Esophagus muscularis mucosa (tissue), 4 donors: ENCODE measurements at regions of chr10 and their contacts with region 1.

Region 1: DNA sequence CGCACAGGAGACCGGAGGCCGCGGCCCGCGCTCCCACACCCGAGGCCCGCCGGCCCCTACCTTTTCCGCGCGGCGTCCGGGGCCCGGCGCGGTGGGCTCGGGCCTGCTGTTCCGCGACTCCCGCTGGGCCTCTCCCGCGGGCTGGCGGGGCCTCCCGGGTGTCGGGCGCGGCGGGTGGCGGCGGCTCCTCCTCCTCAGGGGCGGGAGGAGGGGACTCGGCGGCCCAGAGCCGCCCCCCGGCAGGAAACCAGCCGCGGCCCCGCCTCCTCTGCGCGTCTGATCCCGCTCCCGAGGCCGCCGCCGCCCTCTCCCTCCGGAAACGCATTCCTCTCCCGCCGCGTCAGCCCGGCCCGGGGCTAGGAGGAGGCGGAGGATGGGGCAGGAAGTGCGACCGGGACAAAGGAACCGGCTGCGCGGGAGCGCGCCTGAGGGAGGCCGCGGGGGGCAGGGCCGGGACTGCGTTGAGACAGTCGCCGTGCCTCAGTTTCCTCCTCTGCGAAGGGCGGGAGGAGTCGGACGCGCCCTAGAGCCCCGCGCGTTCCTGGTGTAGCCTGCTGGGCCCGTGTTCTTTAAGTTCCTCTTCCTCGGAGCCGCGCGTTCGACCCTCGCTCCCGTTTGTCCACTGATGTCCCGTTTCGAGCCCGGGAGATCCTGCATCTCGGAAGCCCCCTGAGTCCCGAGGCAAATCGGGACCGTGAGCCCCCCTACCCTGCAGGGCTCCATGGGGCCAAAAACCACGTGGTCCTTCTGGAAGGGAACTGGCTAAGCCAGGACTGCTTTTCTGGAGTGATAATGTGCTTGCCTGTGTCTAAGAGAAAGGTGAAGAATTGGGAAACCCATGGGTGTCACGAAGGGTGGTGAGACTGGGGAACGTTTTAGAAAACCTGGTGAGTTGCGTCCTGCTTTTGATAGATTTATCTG is at the start of gene ITGB1:
- DNase-seq: peak; percentile 98
- H3K4me3 ChIP-seq: peak within 1 kb of the TSS; percentile 96 to 100 (median 99)
- H3K27ac ChIP-seq: peak within 1 kb of the TSS; percentile 96 to 100 (median 98)
- H3K4me1 ChIP-seq: peaks cover 46 to 71% (median 61%) of the 10 kb centered on the region in 4 donors
- H3K27me3 ChIP-seq: no peaks in the 10 kb centered on the region
- CTCF ChIP-seq: no peak
- EP300 ChIP-seq: peak; percentile 28
- POLR2A ChIP-seq: peak; percentile 92
- total RNA-seq, gene ITGB1: 1,385 to 1,873 (median 1,661) TPM

Region 2: DNA sequence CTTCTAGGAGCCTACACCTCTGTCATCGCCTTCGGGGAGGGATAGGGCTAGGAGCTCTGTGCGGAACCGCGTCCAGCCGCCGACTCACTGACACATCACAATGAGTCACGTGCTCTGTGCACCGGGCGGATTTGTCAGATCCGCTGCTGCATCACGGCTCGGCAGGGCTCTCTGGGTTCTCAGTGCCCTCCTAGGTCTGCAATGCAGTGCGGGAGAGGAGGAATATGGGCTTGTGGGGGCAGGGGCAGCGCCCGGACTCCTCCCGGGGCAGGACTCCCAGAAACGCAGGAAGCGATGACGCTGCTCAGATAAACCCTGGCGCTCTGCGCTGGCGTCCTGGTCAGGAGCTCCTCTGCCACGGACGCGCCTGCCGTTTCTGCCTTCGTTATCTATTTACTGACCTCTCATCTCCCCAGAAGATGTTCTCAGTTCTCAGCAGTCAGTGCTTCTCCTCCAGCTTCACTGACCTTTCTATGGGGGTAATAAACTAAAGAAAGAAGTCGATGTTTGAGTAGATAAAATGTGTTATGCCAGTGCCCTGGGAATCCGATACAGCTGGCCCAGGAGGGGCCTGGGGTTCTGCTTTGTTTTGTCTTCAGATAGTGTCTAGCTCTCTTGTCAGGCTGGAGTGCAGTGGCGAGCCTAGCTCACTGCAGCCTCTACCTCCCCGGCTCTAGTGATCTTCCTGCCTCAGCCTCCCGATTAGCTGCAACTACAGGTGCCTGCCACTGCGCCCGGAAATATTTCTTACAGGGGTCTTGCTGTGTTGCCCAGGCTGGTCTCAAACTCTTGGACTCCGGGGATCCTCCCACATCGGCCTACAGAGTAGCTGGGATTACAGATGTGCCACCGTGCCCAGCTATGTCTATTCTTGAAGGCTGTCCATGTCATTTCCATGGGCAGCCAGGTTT is 22.5 kb after region 1 on chr10:
- intact Hi-C with region 1: loop called (anchors 2 kb)
- DNase-seq: peak; percentile 97
- H3K4me3 ChIP-seq: peak overlapping the region; percentile 55 to 61 (median 56)
- H3K27ac ChIP-seq: peak overlapping the region; percentile 94 to 98 (median 95)
- H3K4me1 ChIP-seq: peaks cover 27 to 42% (median 37%) of the 10 kb centered on the region in 4 donors
- H3K27me3 ChIP-seq: no peaks in the 10 kb centered on the region
- CTCF ChIP-seq: peak in 1 of 3 experiments; percentile 30
- EP300 ChIP-seq: peak; percentile 47
- POLR2A ChIP-seq: peak; percentile 80

Region 3: DNA sequence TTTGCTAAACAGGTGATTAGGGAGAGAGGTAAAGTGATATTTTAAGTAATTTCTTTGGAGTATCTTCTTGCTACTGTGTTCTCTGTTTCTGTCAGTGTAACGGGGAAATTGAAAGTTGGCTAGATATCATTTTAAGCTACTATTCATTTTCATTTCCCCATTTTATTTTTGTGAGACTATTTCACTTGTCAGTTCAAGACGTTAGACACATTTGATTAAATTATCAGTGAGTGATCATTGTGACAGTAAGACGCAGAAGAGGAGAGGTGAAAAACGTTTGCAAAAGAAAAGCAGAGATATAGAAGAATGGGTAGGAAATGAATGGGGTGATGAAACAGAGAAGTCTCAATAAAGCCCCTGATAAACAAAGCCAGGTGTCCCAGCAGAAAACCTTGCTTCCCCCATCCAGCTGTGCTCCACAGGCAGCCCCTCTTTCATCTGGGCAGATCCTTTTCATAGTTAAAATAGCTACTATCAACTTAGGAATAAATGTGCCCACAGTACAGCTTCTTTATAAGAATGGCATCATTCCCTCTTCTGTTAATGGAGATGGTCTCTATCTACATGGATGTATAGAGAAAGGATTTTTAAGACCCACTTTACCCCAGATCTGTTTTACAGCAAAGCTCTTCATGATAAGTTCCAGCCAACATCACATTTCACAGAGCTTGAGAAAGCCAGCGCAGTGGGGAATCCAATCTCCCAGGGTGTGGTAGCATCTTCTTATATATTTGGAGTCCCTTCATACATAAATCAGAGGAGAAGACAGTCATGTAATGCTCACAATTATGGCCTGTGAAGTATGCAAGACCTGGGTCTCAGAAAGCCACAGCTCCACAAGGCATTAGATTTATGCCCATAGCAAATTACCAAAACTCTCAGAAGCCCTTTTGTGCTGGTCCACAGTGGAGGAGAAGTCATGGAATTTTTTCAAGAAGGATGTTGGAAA is 137.8 kb after region 1 on chr10:
- intact Hi-C with region 1: no loop called
- DNase-seq: no peak
- H3K4me3 ChIP-seq: no peak overlapping the region
- H3K27ac ChIP-seq: no peak overlapping the region
- H3K4me1 ChIP-seq: peaks cover 0 to 4% (median 0%) of the 10 kb centered on the region in 4 donors
- H3K27me3 ChIP-seq: no peaks in the 10 kb centered on the region
- CTCF ChIP-seq: no peak
- EP300 ChIP-seq: no peak
- POLR2A ChIP-seq: no peak